Ovary (tissue), 10 donors: ENCODE measurements at regions of chr17 and their contacts with region 1.

Region 1: GRCh38 chr17:61009663-61010062 is 332.0 kb downstream of the BCAS3 start:
- DNase-seq: no peak
- H3K4me3 ChIP-seq: no peak overlapping the region
- H3K27ac ChIP-seq: no peak overlapping the region
- H3K4me1 ChIP-seq: no peaks in the 10 kb centered on the region
- H3K27me3 ChIP-seq: no peaks in the 10 kb centered on the region
- CTCF ChIP-seq: no peak
- EP300 ChIP-seq: no peak
- POLR2A ChIP-seq: no peak

Region 2: DNA sequence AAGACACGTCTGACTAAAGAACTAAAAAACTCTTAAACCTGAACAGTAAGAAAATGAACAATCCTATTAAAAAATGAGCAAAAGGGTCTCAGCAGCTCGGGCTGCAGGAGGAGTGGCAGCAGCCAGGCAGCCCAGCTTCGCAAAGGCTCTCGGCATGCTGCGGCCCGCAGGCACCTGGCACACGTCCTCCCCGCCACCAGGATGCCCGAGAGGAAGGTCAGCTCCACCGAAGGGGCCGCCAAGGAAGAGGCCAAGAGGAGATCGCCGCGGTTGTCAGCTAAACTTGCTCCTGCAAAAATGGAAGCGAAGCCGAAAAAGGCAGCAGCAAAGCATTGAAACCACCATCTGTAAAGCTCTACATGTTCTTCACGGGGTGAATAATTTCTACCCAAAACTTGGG is 158.5 kb before region 1 on chr17:
- intact Hi-C with region 1: no loop called
- DNase-seq: no peak
- H3K4me3 ChIP-seq: no peak overlapping the region
- H3K27ac ChIP-seq: no peak overlapping the region
- H3K4me1 ChIP-seq: peaks cover 2% of the 10 kb centered on the region
- H3K27me3 ChIP-seq: no peaks in the 10 kb centered on the region
- CTCF ChIP-seq: no peak
- EP300 ChIP-seq: no peak
- POLR2A ChIP-seq: no peak

Region 3: DNA sequence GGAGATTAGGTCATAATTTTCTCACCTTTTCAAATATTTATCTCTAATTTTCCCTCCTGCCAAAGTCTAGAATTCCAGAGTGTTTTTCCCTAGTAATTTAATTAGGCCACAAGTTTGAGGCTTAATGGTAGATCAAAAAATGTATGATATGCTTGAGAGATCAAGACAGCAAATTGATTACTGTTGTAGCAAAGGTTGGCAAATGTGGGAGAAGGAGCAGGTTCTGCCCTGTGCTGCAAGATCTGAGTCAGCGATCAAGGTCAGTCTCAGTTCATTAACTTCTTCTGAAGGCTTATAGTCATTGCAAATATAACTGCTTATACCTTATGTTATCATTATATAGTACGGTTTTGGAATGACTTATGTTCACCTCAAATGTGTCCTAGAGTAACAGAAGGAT is 158.8 kb after region 1 on chr17:
- intact Hi-C with region 1: no loop called
- DNase-seq: no peak
- H3K4me3 ChIP-seq: no peak overlapping the region
- H3K27ac ChIP-seq: no peak overlapping the region
- H3K4me1 ChIP-seq: no peaks in the 10 kb centered on the region
- H3K27me3 ChIP-seq: no peaks in the 10 kb centered on the region
- CTCF ChIP-seq: no peak
- EP300 ChIP-seq: no peak
- POLR2A ChIP-seq: no peak

Region 4: DNA sequence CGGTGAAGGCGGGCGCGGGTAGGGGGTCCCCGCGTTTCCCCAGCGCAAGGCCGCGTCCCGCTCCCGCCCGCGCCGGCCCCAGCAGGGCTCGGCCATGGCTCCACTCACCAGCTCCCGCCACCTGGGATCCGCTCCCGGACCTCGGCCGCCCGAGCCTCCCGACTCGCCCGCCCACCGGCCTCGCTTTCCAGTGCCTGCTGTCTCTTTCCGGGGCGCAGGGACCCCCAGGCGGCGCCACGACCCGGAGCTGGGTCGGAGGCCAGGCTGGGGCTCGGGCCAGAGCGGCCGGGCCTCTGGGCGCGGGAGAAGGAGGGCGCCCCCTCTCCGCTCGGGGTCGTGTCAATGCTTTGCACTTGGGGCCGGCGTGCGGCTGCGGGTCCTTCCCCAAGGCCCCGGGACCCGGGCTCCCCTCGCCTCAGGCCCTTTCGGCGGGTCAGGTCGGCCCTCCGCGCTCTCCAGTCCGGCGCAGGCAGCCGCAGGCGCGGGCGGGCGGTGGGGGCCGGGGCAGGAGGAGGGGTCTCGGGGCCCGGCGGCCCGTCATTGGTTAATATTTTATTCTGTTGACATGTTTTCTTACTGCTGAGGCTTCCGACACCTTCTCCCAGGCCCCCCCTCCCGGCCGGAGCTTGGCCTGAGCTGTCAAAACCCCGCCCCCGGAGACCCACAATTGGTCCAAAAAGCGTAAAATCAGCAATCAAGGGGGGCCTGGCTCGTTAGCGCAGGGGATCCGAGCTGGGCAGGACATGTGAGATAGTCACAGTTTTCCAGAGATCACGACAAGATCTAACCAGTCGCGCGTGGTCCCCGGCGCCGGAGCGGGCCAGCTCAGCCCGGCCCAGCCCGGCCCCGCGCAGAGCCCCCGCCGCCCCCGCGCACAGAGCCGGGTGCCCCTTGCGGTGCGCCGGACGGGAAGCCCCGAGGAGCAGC is 389.7 kb after region 1 on chr17 and contains the start of gene TBX2:
- intact Hi-C with region 1: loop called (anchors 5 to 10 kb)
- DNase-seq: peak in 4 of 5 donors; percentile 27 to 76 (median 70)
- H3K4me3 ChIP-seq: peak within 1 kb of the TSS; percentile 58
- H3K27ac ChIP-seq: peak within 1 kb of the TSS; percentile 13 to 38
- H3K4me1 ChIP-seq: peaks cover 3% of the 10 kb centered on the region
- H3K27me3 ChIP-seq: peaks cover 8% of the 10 kb centered on the region
- CTCF ChIP-seq: no peak
- EP300 ChIP-seq: no peak
- POLR2A ChIP-seq: no peak
- total RNA-seq, gene TBX2: 5.6 to 22.2 (median 16.9) TPM